Heart right ventricle (tissue), 16 donors: ENCODE measurements at regions of chr11 and their contacts with region 1.

Region 1: DNA sequence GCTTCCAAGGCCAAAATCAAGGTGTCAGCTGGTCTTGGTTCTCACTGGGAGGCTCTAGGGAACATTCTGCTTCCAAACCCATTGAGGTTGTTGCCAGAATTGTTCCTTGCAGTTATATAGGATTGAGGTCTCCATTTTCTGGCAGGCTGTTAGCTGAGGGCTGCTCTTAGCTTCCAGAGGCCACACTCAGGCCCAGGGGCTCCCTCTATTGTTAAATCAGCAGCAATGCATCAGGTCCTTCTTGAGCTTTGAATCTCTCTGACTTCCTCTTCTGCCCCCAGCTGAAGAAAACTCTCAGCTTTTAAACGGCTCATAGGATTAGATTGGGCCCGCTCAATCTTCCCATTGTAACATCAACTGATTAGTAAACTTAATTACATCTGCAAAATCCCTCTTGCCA is 39.3 kb upstream of the BSX start:
- DNase-seq: no peak
- ATAC-seq: peak in 2 of 8 donors; percentile 35 to 42
- H3K4me3 ChIP-seq: no peak overlapping the region
- H3K27ac ChIP-seq: no peak overlapping the region
- H3K4me1 ChIP-seq: peaks cover 0 to 8% (median 0%) of the 10 kb centered on the region in 9 donors
- H3K27me3 ChIP-seq: peaks cover 0 to 25% (median 15%) of the 10 kb centered on the region in 7 donors
- CTCF ChIP-seq: peak in 8 of 9 donors; percentile 8 to 65 (median 51)

Region 2: GRCh38 chr11:122917311-122917710 is 103.7 kb before region 1 on chr11:
- intact Hi-C with region 1: loop called in 7 of 10 experiments (anchors 5 to 10 kb)
- DNase-seq: no peak
- ATAC-seq: no peak
- H3K4me3 ChIP-seq: no peak overlapping the region
- H3K27ac ChIP-seq: no peak overlapping the region
- H3K4me1 ChIP-seq: no peaks in the 10 kb centered on the region
- H3K27me3 ChIP-seq: no peaks in the 10 kb centered on the region
- CTCF ChIP-seq: no peak

Region 3: GRCh38 chr11:123103326-123103980 is 82.5 kb after region 1 on chr11:
- intact Hi-C with region 1: no loop called
- DNase-seq: peak in 1 of 2 donors; percentile 85
- ATAC-seq: peak; percentile 82 to 93 (median 88)
- H3K4me3 ChIP-seq: no peak overlapping the region
- H3K27ac ChIP-seq: peak overlapping the region in 7 of 10 donors; percentile 31 to 75 (median 64)
- H3K4me1 ChIP-seq: peaks cover 8 to 46% (median 23%) of the 10 kb centered on the region in 9 donors
- H3K27me3 ChIP-seq: peaks cover 0 to 3% (median 0%) of the 10 kb centered on the region in 7 donors
- CTCF ChIP-seq: peak; percentile 56 to 83 (median 65)

Region 4: DNA sequence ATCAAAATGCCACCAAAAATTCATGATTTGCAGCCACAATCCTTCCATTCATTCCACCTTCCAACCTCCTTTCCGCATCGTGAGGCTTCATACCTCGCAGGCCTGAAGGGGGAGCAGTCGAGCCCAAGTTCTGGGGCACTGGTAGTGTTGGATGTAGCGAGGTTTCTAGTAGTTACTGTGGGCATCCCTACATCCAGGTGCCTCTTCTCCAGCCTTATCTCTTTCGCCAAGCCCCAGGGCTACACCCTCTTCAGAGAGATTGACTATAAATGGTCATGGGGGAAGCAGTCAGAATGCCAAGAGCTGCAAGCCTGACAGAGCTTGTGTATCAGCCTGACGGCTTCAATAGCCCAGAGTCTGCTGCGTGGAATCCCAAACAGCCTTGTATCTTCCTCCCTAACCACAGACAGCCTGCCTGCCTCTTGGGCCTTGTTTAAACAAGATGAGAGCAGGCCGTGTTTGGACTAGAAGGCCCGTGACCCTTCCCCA is 145.1 kb after region 1 on chr11:
- intact Hi-C with region 1: no loop called
- DNase-seq: peak; percentile 14 to 32
- ATAC-seq: peak in 6 of 8 donors; percentile 28 to 61 (median 48)
- H3K4me3 ChIP-seq: no peak overlapping the region
- H3K27ac ChIP-seq: no peak overlapping the region
- H3K4me1 ChIP-seq: peaks cover 0 to 7% (median 0%) of the 10 kb centered on the region in 9 donors
- H3K27me3 ChIP-seq: peaks cover 0 to 19% (median 6%) of the 10 kb centered on the region in 7 donors
- CTCF ChIP-seq: peak in 8 of 9 donors; percentile 23 to 61 (median 48)